ENCODE measurements at regions of chr5 and their contacts with region 1.

Region 1: DNA sequence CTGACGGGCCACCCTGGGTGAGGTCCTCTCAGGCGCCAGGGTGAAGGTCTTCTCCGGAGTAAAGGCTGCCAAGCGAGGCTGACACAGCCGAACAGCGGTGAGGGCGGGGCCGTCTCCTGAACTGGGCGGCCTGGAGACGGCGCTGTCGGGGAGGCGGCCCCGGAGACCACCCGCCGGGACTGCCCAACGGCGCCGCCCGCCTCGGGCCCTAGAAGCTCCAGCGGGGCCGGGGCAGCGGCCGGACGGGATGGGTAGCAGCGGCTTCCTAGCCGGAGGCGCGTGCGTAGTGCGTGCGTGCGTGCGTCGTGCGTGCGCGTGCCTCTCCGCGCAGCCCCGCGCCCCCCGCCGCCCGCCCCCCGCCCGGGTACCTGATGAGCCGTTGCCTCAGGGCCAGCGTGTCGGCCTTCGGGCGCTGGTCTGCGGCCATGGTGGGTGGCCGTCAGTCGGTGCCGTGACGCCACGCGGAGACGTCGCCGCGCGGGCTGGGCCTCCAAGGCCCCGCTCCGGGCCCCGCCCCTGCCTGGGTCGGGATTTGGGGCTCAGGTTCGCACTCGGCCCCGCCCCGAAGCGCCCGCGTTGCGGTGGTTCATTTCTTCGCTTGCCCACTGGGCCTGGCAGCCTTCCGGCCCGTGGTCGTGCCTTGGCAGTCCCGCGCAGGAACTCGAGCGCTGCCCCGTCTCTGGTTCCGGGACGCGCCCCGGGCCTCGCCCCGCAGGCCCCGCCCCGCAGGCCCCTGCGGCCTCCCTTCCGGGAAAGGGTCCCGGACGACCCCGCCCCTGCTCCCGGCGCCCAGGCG is at the start of gene PHYKPL:
- DNase-seq: peak; percentile 77 to 92 (median 86)
- ATAC-seq: peak; percentile 79
- H3K4me3 ChIP-seq: peak within 1 kb of the TSS; percentile 93
- H3K27ac ChIP-seq: peak within 1 kb of the TSS; percentile 87
- H3K4me1 ChIP-seq: peaks cover 31 to 39% of the 10 kb centered on the region in 2 experiments
- H3K27me3 ChIP-seq: no peaks in the 10 kb centered on the region
- CTCF ChIP-seq: peak in 2 of 3 experiments; percentile 14 to 61; a peak in 2 of 6 replicates
- EP300 ChIP-seq: no peak
- POLR2A ChIP-seq: peak; percentile 76
- RAD21 ChIP-seq: no peak
- polyA plus RNA-seq, gene PHYKPL: 4.7 to 6.5 TPM

Region 2: GRCh38 chr5:178204182-178204894 is 28.0 kb before region 1 on chr5 and contains the start of gene HNRNPAB:
- CTCF ChIA-PET with region 1: no interaction called
- POLR2A ChIA-PET with region 1: interaction called, 162 read pairs
- in situ Hi-C with region 1: no loop called
- intact Hi-C with region 1: no loop called
- DNase-seq: peak; percentile 97 to 100 (median 98)
- ATAC-seq: peak; percentile 87
- H3K4me3 ChIP-seq: peak within 1 kb of the TSS; percentile 80
- H3K27ac ChIP-seq: peak within 1 kb of the TSS; percentile 94
- H3K4me1 ChIP-seq: peaks cover 21 to 23% of the 10 kb centered on the region in 2 experiments; a peak in 4 of 5 replicates
- H3K27me3 ChIP-seq: no peaks in the 10 kb centered on the region
- CTCF ChIP-seq: no peak
- EP300 ChIP-seq: no peak
- POLR2A ChIP-seq: peak; percentile 100
- RAD21 ChIP-seq: no peak
- polyA plus RNA-seq, gene HNRNPAB: 34.6 to 44.7 TPM

Region 3: GRCh38 chr5:178221282-178221681 is 11.0 kb before region 1 on chr5:
- CTCF ChIA-PET with region 1: no interaction called
- POLR2A ChIA-PET with region 1: interaction called, 162 read pairs
- in situ Hi-C with region 1: no loop called
- intact Hi-C with region 1: no loop called
- DNase-seq: no peak
- ATAC-seq: peak; percentile 7; the same call in 2 of the 3 replicates
- H3K4me3 ChIP-seq: no peak overlapping the region
- H3K27ac ChIP-seq: no peak overlapping the region
- H3K4me1 ChIP-seq: peaks cover 7 to 20% of the 10 kb centered on the region in 2 experiments; a peak in 3 of 5 replicates
- H3K27me3 ChIP-seq: no peaks in the 10 kb centered on the region
- CTCF ChIP-seq: no peak
- EP300 ChIP-seq: no peak
- POLR2A ChIP-seq: peak; percentile 46
- RAD21 ChIP-seq: no peak

Region 4: DNA sequence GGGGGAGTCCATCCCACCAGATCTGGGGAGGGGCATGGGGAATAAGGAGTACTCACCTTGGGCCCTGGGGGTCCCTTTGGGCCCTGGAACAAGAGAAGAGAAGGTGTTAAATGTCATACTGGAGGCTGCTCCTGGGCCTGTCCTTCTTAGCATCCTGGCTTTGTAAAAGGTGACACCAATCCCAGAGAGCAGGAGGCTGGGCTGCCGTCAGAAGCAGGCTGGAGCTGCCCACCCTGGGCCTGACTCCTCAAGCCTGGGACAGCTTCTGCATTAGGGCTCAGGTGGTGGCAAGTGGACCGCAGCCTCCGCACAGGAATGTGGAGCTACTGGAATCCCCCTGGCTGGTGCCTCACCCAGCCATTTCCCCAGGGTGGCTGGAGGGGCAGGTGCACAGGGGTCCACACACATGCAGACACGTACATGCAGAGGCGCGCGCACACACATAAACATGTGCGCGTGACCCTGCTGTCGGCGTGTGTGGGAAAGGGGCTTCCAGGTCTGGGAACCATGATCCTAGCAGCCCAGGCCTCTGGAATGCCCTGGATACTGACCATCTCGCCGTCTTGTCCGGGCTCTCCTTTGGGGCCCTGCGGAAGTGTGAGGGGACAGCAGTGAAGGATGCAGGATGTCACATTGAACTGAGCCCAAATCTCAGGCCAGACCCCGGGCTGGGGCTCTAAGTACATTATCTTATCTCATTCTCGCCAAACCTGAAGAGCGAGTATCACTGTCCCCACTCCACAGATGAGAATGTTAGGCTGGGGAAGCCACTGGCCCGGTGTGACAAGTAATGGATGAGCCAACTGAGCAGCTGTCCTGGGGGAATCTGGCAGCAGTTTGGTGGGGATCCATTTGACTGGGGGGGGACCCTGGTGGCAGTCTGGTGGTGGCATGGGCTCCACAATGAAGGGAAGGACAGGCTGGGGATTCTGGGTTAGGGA is 29.6 kb after region 1 on chr5:
- CTCF ChIA-PET with region 1: no interaction called
- POLR2A ChIA-PET with region 1: no interaction called
- in situ Hi-C with region 1: no loop called
- intact Hi-C with region 1: no loop called
- DNase-seq: no peak
- ATAC-seq: no peak
- H3K4me3 ChIP-seq: no peak overlapping the region
- H3K27ac ChIP-seq: no peak overlapping the region
- H3K4me1 ChIP-seq: peaks cover 0 to 10% of the 10 kb centered on the region in 2 experiments; a peak in 2 of 5 replicates
- H3K27me3 ChIP-seq: peaks cover 0 to 44% of the 10 kb centered on the region in 2 experiments; a peak in 3 of 5 replicates
- CTCF ChIP-seq: no peak
- EP300 ChIP-seq: no peak
- POLR2A ChIP-seq: no peak
- RAD21 ChIP-seq: no peak

Region 5: DNA sequence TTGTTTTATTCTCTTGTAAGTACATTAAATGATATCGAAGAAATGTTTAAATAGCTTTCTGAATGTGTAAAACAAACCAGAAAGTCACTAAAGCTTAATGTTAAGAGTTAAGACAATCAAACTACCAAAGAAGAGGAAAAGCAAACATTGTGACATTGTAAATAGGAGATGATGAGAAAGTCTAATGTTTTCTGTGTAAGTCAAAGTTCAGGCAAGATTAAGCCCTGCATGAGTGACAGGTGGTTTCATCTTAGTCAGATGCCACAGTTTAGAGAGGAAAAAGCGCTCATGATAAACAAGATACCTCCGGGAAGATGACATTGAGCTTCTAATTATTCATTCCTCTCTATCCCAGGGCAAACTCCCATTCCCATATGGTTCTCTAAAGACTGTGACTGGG is 51.2 kb after region 1 on chr5:
- CTCF ChIA-PET with region 1: no interaction called
- POLR2A ChIA-PET with region 1: no interaction called
- in situ Hi-C with region 1: no loop called
- intact Hi-C with region 1: no loop called
- DNase-seq: no peak
- ATAC-seq: no peak
- H3K4me3 ChIP-seq: no peak overlapping the region
- H3K27ac ChIP-seq: no peak overlapping the region
- H3K4me1 ChIP-seq: peaks cover 0 to 12% of the 10 kb centered on the region in 2 experiments; a peak in 3 of 5 replicates
- H3K27me3 ChIP-seq: peaks cover 7 to 59% of the 10 kb centered on the region in 2 experiments; a peak in 3 of 5 replicates
- CTCF ChIP-seq: no peak
- EP300 ChIP-seq: no peak
- POLR2A ChIP-seq: no peak
- RAD21 ChIP-seq: no peak

Region 6: DNA sequence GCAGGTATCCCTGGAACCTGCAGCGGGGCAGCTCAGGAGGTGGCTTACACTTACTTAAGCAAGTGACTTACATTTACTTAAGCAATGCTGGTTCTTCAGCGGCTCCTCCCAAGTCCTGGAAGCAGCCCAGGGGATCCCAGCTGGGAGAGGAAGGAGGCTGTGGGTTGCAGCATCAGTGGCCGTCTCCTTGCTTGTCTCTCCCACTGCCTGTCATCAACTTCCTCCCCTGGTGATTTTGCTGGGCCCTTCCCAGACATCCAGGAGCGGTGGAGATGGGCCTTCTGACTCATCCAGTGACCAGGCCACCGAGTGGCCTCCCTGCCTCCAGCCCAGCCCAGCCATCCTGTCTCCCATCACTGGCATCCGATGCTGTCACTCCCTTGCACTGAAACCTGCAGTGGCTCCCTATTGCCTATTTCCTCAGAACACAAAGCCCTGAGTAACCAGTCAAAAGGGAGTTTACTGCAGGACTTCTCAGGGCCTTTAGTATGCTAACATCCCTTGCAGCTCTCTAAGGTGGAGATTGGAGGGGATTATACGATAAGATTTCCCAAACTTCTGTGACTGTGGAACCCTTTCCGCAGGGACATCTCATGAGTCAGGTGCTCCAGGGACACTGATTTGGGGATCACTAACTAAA is 156.2 kb after region 1 on chr5:
- CTCF ChIA-PET with region 1: no interaction called
- POLR2A ChIA-PET with region 1: no interaction called
- in situ Hi-C with region 1: no loop called
- intact Hi-C with region 1: no loop called
- DNase-seq: no peak
- ATAC-seq: no peak
- H3K4me3 ChIP-seq: no peak overlapping the region
- H3K27ac ChIP-seq: no peak overlapping the region
- H3K4me1 ChIP-seq: peaks cover 0 to 10% of the 10 kb centered on the region in 2 experiments; a peak in 2 of 5 replicates
- H3K27me3 ChIP-seq: peaks cover 63 to 92% of the 10 kb centered on the region in 2 experiments
- CTCF ChIP-seq: no peak
- EP300 ChIP-seq: no peak
- POLR2A ChIP-seq: no peak
- RAD21 ChIP-seq: no peak

Region 7: DNA sequence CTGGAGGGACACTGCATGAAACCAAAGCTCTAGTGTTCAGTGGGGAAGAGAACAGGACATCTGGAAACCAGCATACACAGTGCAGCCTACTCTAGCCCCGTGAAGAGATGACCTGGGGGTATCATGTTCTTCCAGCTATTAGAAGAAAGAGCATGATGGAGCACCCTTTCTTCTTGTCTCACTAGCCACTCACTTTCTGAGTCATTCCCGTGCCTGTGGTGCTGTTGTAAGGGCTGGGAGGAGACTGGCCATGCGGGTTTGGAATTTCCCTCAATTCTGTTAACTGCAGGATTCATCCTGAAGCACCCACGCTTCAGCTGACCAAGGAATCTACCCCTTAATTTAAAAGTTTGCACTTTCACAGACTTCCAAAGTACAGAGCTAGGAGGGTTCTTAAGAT is 220.9 kb after region 1 on chr5:
- CTCF ChIA-PET with region 1: no interaction called
- POLR2A ChIA-PET with region 1: no interaction called
- in situ Hi-C with region 1: no loop called
- intact Hi-C with region 1: no loop called
- DNase-seq: peak; percentile 44 to 67 (median 48)
- ATAC-seq: peak; percentile 32
- H3K4me3 ChIP-seq: no peak overlapping the region
- H3K27ac ChIP-seq: no peak overlapping the region
- H3K4me1 ChIP-seq: peaks cover 30 to 42% of the 10 kb centered on the region in 2 experiments
- H3K27me3 ChIP-seq: no peaks in the 10 kb centered on the region; a peak in 1 of 5 replicates
- CTCF ChIP-seq: no peak
- EP300 ChIP-seq: peak; percentile 25; the same call in 1 of the 2 replicates
- POLR2A ChIP-seq: no peak
- RAD21 ChIP-seq: no peak